CD8-positive, alpha-beta T cell (primary cell): ENCODE measurements at regions of chr14 and their contacts with region 1.

Region 1: GRCh38 chr14:65102441-65103149 is at the start of gene MAX:
- DNase-seq: peak; percentile 96 to 99 (median 98)
- ATAC-seq: peak; percentile 82
- H3K4me3 ChIP-seq: peak within 1 kb of the TSS; percentile 81 to 97
- H3K4me3 Mint-ChIP-seq: peak within 1 kb of the TSS; percentile 88
- H3K27ac ChIP-seq: peak within 1 kb of the TSS; percentile 91 to 95
- H3K27ac Mint-ChIP-seq: peak within 1 kb of the TSS; percentile 96
- H3K4me1 ChIP-seq: peaks cover 35% of the 10 kb centered on the region
- H3K4me1 Mint-ChIP-seq: peaks cover 41% of the 10 kb centered on the region
- H3K27me3 ChIP-seq: no peaks in the 10 kb centered on the region
- H3K27me3 Mint-ChIP-seq: no peaks in the 10 kb centered on the region
- CTCF ChIP-seq: no peak
- total RNA-seq, gene MAX: 143 to 153 TPM

Region 2: DNA sequence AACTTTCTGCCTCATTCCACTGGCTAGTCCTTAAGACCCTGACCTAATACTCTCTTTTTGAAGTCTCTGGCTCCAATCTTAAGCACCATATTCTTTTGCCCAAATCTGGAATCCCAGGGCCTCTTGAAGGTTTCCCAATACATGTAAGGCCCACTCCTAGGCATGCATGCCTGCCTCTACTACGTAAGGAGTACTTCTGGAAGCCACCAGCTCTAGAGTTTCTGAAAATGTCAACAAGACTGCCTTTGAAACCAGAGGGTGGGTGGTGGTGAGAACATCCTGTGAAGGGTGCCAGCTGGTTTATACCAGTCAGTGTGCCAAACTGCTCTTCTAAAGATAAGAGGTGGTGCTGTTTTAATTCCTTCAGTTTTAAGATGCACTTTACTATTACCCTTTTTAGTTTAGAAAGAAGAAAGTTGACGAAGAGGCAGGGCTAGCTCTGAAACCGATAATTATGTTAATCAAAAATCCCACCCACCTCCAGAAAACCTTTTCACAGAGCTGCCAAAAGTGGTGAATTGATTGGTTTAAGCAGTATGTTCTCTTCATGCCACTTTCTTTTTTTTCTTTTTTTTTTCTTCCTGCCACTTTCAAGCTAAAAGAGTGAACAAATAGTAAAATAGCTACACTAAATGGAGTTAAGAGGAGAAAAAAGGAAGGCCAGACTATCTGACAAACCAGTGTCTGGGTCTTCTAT is 1452.2 kb before region 1 on chr14:
- CTCF ChIA-PET with region 1: no interaction called
- POLR2A ChIA-PET with region 1: no interaction called
- intact Hi-C with region 1: loop called in 1 of 2 experiments (anchors 5 kb)
- DNase-seq: peak; percentile 19 to 87 (median 65)
- ATAC-seq: peak; percentile 96
- H3K4me3 ChIP-seq: peak overlapping the region; percentile 10 to 26
- H3K4me3 Mint-ChIP-seq: peak overlapping the region; percentile 69
- H3K27ac ChIP-seq: peak overlapping the region; percentile 78 to 93
- H3K27ac Mint-ChIP-seq: peak overlapping the region; percentile 100
- H3K4me1 ChIP-seq: peaks cover 40% of the 10 kb centered on the region
- H3K4me1 Mint-ChIP-seq: peaks cover 52% of the 10 kb centered on the region
- H3K27me3 ChIP-seq: no peaks in the 10 kb centered on the region
- H3K27me3 Mint-ChIP-seq: no peaks in the 10 kb centered on the region
- CTCF ChIP-seq: no peak

Region 3: DNA sequence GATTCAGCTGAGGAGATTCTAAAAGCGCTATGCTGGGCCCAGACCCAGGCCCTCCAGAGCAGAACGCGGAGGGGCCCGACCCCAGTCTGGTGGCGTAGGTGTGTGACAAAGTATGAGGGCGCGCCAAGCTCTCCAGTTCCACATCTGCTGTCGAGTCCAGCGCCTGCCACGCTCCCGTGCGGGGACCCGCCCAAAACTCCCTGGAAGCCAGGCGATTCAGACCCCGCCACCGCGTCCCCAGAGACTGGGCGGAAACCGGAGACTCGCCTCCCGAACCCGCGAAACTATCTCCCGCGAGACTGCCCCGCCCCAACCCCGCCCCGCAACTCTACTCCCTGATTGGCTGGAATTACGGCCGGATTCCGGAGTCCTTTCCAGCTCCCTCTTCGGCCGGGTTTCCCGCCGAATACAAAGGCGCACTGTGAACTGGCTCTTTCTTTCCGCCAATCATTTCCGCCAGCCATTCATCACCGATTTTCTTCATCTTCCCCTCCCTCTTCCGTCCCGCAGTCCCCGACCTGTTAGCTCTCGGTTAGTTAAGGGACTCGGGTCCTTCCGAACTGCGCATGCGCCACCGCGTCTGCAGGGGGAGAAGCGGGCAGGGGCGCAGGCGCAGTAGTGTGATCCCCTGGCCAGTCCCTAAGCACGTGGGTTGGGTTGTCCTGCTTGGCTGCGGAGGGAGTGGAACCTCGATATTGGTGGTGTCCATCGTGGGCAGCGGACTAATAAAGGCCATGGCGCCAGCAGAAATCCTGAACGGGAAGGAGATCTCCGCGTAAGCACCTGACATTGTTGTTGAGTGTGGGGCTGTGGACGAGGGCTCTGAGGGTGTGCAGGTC is 714.7 kb before region 1 on chr14 and contains the start of gene MTHFD1:
- CTCF ChIA-PET with region 1: no interaction called
- POLR2A ChIA-PET with region 1: no interaction called
- intact Hi-C with region 1: loop called in 1 of 2 experiments (anchors 5 kb)
- DNase-seq: peak; percentile 88 to 98 (median 97)
- ATAC-seq: peak; percentile 84
- H3K4me3 ChIP-seq: peak within 1 kb of the TSS; percentile 79 to 80
- H3K4me3 Mint-ChIP-seq: peak within 1 kb of the TSS; percentile 99
- H3K27ac ChIP-seq: peak within 1 kb of the TSS; percentile 33 to 50
- H3K27ac Mint-ChIP-seq: peak within 1 kb of the TSS; percentile 95
- H3K4me1 ChIP-seq: peaks cover 20% of the 10 kb centered on the region
- H3K4me1 Mint-ChIP-seq: peaks cover 37% of the 10 kb centered on the region
- H3K27me3 ChIP-seq: no peaks in the 10 kb centered on the region
- H3K27me3 Mint-ChIP-seq: no peaks in the 10 kb centered on the region
- CTCF ChIP-seq: no peak
- total RNA-seq, gene MTHFD1: 14.4 to 15.6 TPM

Region 4: DNA sequence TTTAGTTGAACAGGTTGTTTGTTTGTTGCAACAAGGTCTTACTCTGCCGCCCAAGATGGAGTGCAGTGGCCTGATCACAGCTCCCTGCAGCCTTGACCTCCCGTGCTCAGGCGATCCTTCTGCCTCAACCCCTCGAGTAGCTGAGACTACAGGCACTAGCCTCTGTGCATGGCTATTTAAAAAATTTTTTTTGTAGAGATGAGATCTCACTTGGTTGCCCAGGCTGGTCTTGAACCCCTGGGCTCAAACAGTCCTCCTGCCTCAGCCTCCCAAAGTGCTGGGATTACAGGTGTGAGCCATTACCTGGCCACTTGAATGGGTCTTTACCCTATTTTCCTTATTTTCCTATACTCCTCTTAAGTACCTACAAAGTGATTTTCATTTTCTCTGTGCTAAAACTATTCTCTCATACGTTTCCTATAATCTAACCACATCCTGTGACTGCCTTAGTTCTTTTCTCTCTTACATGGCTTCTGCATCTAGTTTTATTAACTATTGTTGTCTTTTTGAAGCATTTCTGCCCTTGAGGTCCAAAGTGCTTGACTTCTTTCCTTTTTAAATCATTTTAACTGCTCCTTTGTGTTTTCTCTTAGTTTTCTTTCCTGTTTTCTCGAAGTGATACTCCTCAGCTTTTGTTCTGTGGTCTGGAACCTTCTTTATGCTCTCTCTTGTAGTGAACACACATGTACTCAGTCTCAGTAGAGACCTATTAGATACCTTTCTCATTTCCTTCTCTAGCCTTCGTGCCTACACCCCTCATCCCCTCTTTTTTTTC is 174.2 kb before region 1 on chr14:
- CTCF ChIA-PET with region 1: no interaction called
- POLR2A ChIA-PET with region 1: no interaction called
- intact Hi-C with region 1: loop called in 1 of 2 experiments (anchors 5 kb)
- DNase-seq: peak in 2 of 9 experiments; percentile 34 to 65
- ATAC-seq: peak; percentile 81
- H3K4me3 ChIP-seq: peak overlapping the region; percentile 0 to 26
- H3K4me3 Mint-ChIP-seq: no peak overlapping the region
- H3K27ac ChIP-seq: peak overlapping the region; percentile 49 to 79
- H3K27ac Mint-ChIP-seq: no peak overlapping the region
- H3K4me1 ChIP-seq: peaks cover 66% of the 10 kb centered on the region
- H3K4me1 Mint-ChIP-seq: peaks cover 28% of the 10 kb centered on the region
- H3K27me3 ChIP-seq: no peaks in the 10 kb centered on the region
- H3K27me3 Mint-ChIP-seq: no peaks in the 10 kb centered on the region
- CTCF ChIP-seq: no peak

Region 5: DNA sequence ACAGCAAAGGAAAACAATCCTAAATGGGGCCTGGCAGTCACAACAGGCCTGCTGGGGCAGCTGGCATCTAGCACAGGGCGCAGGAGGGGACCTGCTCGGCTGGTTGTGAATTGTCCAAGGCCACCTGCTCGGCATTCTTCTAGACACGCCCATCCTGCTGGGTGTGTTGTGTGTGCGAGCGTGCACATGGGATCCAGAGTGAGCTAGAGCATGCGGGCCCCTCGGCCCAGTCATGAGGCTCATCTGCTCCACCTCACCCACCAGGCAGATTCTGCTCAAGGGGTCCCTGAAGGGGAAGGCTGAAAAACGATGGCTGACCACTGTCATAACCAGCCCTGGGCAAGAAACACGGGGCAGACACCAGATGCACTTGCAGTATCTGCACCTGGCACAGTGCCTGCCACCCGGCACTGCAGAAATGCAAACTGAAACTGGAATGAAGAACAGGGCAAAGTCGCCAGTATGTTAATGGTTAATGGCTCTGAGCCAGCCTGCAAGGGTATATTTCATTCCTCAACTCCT is 32.1 kb before region 1 on chr14:
- CTCF ChIA-PET with region 1: no interaction called
- POLR2A ChIA-PET with region 1: no interaction called
- intact Hi-C with region 1: no loop called
- DNase-seq: no peak
- ATAC-seq: no peak
- H3K4me3 ChIP-seq: no peak overlapping the region
- H3K4me3 Mint-ChIP-seq: no peak overlapping the region
- H3K27ac ChIP-seq: no peak overlapping the region
- H3K27ac Mint-ChIP-seq: no peak overlapping the region
- H3K4me1 ChIP-seq: peaks cover 5% of the 10 kb centered on the region
- H3K4me1 Mint-ChIP-seq: peaks cover 18% of the 10 kb centered on the region
- H3K27me3 ChIP-seq: no peaks in the 10 kb centered on the region
- H3K27me3 Mint-ChIP-seq: no peaks in the 10 kb centered on the region
- CTCF ChIP-seq: no peak

Region 6: GRCh38 chr14:65156568-65157366 is 54.2 kb after region 1 on chr14:
- CTCF ChIA-PET with region 1: no interaction called
- POLR2A ChIA-PET with region 1: no interaction called
- intact Hi-C with region 1: no loop called
- DNase-seq: no peak
- ATAC-seq: no peak
- H3K4me3 ChIP-seq: no peak overlapping the region
- H3K4me3 Mint-ChIP-seq: no peak overlapping the region
- H3K27ac ChIP-seq: no peak overlapping the region
- H3K27ac Mint-ChIP-seq: no peak overlapping the region
- H3K4me1 ChIP-seq: no peaks in the 10 kb centered on the region
- H3K4me1 Mint-ChIP-seq: no peaks in the 10 kb centered on the region
- H3K27me3 ChIP-seq: no peaks in the 10 kb centered on the region
- H3K27me3 Mint-ChIP-seq: no peaks in the 10 kb centered on the region
- CTCF ChIP-seq: no peak

Region 7: GRCh38 chr14:65847075-65847847 is 744.7 kb after region 1 on chr14:
- CTCF ChIA-PET with region 1: no interaction called
- POLR2A ChIA-PET with region 1: no interaction called
- intact Hi-C with region 1: loop called in 1 of 2 experiments (anchors 1 kb)
- DNase-seq: peak; percentile 41 to 93 (median 70)
- ATAC-seq: peak; percentile 87
- H3K4me3 ChIP-seq: peak overlapping the region; percentile 13 to 21
- H3K4me3 Mint-ChIP-seq: peak overlapping the region; percentile 71
- H3K27ac ChIP-seq: peak overlapping the region; percentile 57 to 84
- H3K27ac Mint-ChIP-seq: peak overlapping the region; percentile 92
- H3K4me1 ChIP-seq: peaks cover 90% of the 10 kb centered on the region
- H3K4me1 Mint-ChIP-seq: peaks cover 85% of the 10 kb centered on the region
- H3K27me3 ChIP-seq: no peaks in the 10 kb centered on the region
- H3K27me3 Mint-ChIP-seq: no peaks in the 10 kb centered on the region
- CTCF ChIP-seq: no peak